Naive thymus-derived CD8-positive, alpha-beta T cell (primary cell): ENCODE measurements at regions of chr21 and their contacts with region 1.

Region 1: GRCh38 chr21:46635324-46636172 is at the start of gene PRMT2:
- DNase-seq: peak; percentile 95 to 99 (median 98)
- ATAC-seq: peak; percentile 72 to 74
- H3K4me3 Mint-ChIP-seq: peak within 1 kb of the TSS; percentile 87 to 100 (median 97)
- H3K27ac Mint-ChIP-seq: peak within 1 kb of the TSS; percentile 93 to 100 (median 96)
- H3K4me1 Mint-ChIP-seq: peaks cover 33 to 83% (median 65%) of the 10 kb centered on the region in 4 donors
- H3K27me3 Mint-ChIP-seq: no peaks in the 10 kb centered on the region
- polyA plus RNA-seq, gene PRMT2: 358 to 485 (median 396) TPM

Region 2: GRCh38 chr21:46458315-46459023 is 177.1 kb before region 1 on chr21 and contains the start of gene DIP2A:
- POLR2A ChIA-PET with region 1: interaction called, 28 read pairs
- DNase-seq: peak; percentile 85 to 98 (median 94)
- ATAC-seq: peak; percentile 96 to 97
- H3K4me3 Mint-ChIP-seq: peak within 1 kb of the TSS; percentile 89 to 97 (median 92)
- H3K27ac Mint-ChIP-seq: peak within 1 kb of the TSS; percentile 78 to 98 (median 96)
- H3K4me1 Mint-ChIP-seq: peaks cover 21 to 67% (median 58%) of the 10 kb centered on the region in 4 donors
- H3K27me3 Mint-ChIP-seq: no peaks in the 10 kb centered on the region
- polyA plus RNA-seq, gene DIP2A: 26.8 to 33.6 (median 28.6) TPM

Region 3: GRCh38 chr21:46486481-46487126 is 148.9 kb before region 1 on chr21:
- POLR2A ChIA-PET with region 1: no interaction called
- DNase-seq: no peak
- ATAC-seq: no peak
- H3K4me3 Mint-ChIP-seq: no peak overlapping the region
- H3K27ac Mint-ChIP-seq: peak overlapping the region in 6 of 10 donors; percentile 14 to 74 (median 52)
- H3K4me1 Mint-ChIP-seq: peaks cover 11 to 74% (median 46%) of the 10 kb centered on the region in 4 donors
- H3K27me3 Mint-ChIP-seq: no peaks in the 10 kb centered on the region

Region 4: GRCh38 chr21:46540087-46540710 is 95.3 kb before region 1 on chr21:
- POLR2A ChIA-PET with region 1: interaction called, 12 read pairs
- DNase-seq: peak in 1 of 10 donors; percentile 47
- ATAC-seq: no peak
- H3K4me3 Mint-ChIP-seq: peak overlapping the region in 6 of 10 donors; percentile 4 to 77 (median 54)
- H3K27ac Mint-ChIP-seq: peak overlapping the region; percentile 30 to 95 (median 88)
- H3K4me1 Mint-ChIP-seq: peaks cover 24 to 97% (median 88%) of the 10 kb centered on the region in 4 donors
- H3K27me3 Mint-ChIP-seq: no peaks in the 10 kb centered on the region

Region 5: GRCh38 chr21:46559291-46559983 is 76.1 kb before region 1 on chr21:
- POLR2A ChIA-PET with region 1: interaction called, 681 read pairs
- DNase-seq: peak; percentile 46 to 84 (median 72)
- ATAC-seq: peak; percentile 66 to 75
- H3K4me3 Mint-ChIP-seq: peak overlapping the region; percentile 71 to 89 (median 81)
- H3K27ac Mint-ChIP-seq: peak overlapping the region; percentile 96 to 99 (median 99)
- H3K4me1 Mint-ChIP-seq: peaks cover 42 to 96% (median 84%) of the 10 kb centered on the region in 4 donors
- H3K27me3 Mint-ChIP-seq: no peaks in the 10 kb centered on the region

Region 6: DNA sequence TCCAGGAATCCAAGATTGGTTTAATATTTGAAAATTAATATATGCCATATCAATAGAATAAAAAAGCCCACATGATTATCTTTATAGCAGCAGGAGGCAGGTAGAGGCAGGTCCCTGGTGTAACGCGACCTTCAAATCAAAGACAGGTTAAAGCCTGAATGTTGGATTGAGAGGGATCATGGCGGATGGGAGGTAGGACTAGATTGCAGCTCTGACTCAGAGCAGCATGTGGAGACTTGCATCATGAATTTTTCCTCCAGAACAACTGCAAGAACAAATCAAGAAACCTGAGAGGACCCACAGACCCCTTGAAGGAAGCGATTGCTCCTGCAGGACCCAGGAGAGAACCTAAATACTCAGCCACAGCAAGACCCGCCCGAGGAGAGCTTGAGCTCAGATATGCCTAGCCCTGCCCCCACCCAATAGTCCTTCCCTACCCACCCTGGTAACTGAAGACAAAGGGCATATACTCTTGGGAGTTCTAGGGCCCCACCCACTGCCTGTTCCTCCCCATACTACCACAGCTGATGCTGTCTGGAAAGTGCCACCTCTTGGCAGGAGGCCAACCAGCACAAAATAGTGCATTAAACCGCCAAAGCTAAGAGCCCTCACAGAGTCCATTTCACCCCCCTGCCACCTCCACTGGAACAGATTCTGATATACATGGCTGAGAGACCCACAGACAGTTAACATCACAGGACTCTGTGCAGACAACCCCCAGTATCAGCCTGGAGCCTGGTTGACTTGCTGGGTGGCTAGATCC is 50.2 kb before region 1 on chr21:
- POLR2A ChIA-PET with region 1: interaction called, 30 read pairs
- DNase-seq: no peak
- ATAC-seq: no peak
- H3K4me3 Mint-ChIP-seq: peak overlapping the region in 5 of 10 donors; percentile 10 to 42 (median 18)
- H3K27ac Mint-ChIP-seq: peak overlapping the region in 6 of 10 donors; percentile 8 to 72 (median 46)
- H3K4me1 Mint-ChIP-seq: peaks cover 24 to 50% (median 39%) of the 10 kb centered on the region in 4 donors
- H3K27me3 Mint-ChIP-seq: peaks cover 0 to 3% (median 0%) of the 10 kb centered on the region in 5 donors

Region 7: DNA sequence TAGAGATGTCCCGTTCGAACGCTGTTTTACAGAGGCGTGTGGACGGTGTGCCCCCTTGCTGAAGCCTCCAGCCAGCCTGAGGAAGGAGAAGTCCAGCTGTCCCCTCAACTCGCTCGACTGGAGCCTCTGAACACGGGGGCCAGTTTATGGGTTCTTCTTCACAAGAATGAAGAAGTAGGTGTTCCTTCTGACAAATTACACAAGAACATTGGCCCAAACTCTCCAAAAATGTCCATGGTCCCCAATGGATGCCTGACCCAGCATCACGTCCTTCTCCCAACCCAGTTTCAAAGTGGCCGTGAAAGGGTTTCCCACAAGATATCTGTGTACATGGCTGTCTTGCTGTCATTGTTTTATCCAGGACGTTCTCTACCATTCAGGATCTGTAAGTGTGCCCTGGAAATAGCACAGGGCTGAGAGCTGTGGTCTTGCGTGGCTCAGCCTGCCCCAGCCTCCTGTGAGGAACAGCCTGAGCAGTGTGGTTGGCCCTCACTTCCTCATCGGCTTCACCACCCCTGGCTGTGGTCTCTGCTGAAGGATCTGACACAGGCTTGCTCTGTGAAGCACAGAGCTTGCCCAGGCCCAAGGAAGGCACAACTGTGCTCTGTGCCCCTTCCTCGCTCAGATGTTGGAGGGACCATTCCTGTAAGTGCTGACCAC is 29.7 kb before region 1 on chr21:
- POLR2A ChIA-PET with region 1: interaction called, 168 read pairs
- DNase-seq: peak in 9 of 10 donors; percentile 37 to 80 (median 51)
- ATAC-seq: peak; percentile 88 to 91
- H3K4me3 Mint-ChIP-seq: peak overlapping the region; percentile 16 to 92 (median 85)
- H3K27ac Mint-ChIP-seq: peak overlapping the region; percentile 82 to 95 (median 93)
- H3K4me1 Mint-ChIP-seq: peaks cover 35 to 79% (median 57%) of the 10 kb centered on the region in 4 donors
- H3K27me3 Mint-ChIP-seq: no peaks in the 10 kb centered on the region

Region 8: DNA sequence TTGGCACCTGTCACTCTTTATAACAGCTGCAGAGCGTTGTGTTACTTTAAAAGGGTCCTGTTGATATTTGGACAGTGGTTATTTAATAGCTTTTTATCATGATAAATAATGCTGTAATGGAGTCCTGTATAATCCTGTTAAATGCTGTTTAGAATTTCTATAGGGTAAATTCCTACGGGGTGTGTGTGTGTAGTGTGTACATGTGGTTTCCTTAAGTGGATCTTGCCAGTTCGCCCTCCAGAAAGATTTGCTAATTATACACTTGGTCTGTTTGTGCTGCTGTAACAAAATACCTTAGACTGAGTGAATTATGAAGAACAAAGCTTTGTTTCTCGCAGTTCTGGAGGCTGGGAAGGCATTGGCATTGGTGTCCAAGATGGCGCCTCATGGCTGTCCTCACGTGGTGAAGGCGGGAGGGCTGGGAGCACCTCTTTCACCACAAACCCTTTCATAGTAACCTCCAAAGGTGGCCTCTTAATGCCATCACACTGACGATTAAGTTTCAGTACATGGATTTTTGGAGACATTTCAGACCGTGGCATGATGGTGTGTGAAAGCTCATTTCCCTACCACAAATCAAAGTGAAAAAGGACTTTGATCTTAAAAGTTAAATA is 11.1 kb after region 1 on chr21:
- POLR2A ChIA-PET with region 1: interaction called, 12 read pairs
- DNase-seq: no peak
- ATAC-seq: peak in 1 of 2 donors; percentile 35
- H3K4me3 Mint-ChIP-seq: peak overlapping the region in 9 of 10 donors; percentile 19 to 49 (median 37)
- H3K27ac Mint-ChIP-seq: peak overlapping the region; percentile 17 to 85 (median 71)
- H3K4me1 Mint-ChIP-seq: peaks cover 16 to 85% (median 55%) of the 10 kb centered on the region in 4 donors
- H3K27me3 Mint-ChIP-seq: no peaks in the 10 kb centered on the region

Region 9: DNA sequence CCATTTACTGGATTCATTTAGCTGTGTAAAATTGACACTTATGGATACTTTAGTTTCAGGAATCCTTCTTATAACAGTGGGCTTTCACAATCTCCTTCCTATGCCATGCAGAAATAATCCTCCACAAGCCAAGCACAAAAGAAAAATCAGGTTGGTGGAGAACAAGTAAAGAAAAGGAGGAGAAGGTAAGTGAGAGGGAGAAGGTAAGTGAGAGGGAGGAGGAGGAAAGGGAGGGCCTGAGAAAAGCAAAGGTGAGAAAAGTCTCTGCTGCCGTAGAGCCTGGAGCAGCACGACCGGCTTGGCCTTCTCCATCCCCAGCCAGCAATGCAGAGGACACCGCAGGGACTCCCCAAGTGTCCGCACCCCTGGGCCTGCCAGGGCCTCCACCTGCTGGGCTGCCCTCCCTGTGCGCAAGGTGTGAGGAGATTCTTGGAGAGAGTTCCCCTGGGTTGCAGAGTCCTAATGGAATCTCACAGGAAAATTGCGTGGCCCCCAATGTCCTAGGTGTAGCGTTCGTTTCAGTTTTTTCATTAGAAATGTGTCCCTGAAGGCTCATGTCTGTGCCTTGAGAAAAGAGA is 39.0 kb after region 1 on chr21:
- POLR2A ChIA-PET with region 1: no interaction called
- DNase-seq: no peak
- ATAC-seq: no peak
- H3K4me3 Mint-ChIP-seq: no peak overlapping the region
- H3K27ac Mint-ChIP-seq: no peak overlapping the region
- H3K4me1 Mint-ChIP-seq: peaks cover 0 to 4% (median under 1%) of the 10 kb centered on the region in 4 donors
- H3K27me3 Mint-ChIP-seq: peaks cover 0 to 3% (median 0%) of the 10 kb centered on the region in 5 donors